ENCODE measurements at regions of chr9 and their contacts with region 1.

Region 1: DNA sequence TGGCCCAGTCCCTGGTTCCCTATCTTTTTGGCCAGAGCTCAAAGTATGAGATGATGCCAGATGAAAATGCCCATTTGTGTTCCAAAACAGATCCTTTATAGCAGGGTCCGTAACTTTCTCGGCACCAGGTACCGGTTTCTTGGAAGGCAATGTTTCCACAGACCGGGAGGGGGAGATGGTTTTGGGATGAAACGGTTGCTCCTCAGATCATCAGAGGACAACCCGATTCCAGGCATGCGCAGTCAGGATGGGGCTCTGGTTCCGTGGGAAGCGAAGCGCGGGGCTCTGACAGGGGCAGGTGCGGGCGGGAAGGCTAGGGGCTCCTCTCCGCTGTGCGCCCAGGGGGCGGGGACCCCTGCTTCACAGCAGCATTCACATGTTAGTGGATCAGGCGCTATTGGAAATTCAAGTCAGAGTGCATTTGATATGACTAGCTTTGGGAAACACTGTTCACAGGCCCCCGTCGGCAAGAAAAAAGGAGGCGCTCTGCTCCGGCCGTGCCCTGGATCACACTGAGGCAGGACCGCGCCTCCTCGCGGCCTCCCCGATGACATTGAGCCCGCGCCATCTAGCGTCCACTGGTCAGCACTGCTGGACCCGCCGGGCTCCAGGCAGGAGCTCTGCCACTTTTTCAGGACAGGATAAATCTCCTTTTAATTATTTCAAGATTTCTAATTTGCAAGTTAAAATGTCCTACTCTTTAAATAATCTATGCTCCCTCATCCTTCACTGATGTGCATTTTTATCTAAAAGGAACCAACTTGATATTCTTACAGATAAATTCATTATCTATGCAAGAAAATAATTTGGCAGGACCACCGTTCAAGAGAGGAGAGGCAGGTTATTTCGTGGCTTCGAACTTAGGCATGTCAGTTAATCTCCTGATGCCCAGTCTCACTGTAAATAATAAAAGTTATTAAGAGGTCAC is 190.0 kb downstream of the FANCC start:
- DNase-seq: peak; percentile 79
- H3K4me3 Mint-ChIP-seq: no peak overlapping the region
- H3K27ac Mint-ChIP-seq: no peak overlapping the region
- H3K4me1 Mint-ChIP-seq: peaks cover 2% of the 10 kb centered on the region
- H3K27me3 Mint-ChIP-seq: no peaks in the 10 kb centered on the region

Region 2: DNA sequence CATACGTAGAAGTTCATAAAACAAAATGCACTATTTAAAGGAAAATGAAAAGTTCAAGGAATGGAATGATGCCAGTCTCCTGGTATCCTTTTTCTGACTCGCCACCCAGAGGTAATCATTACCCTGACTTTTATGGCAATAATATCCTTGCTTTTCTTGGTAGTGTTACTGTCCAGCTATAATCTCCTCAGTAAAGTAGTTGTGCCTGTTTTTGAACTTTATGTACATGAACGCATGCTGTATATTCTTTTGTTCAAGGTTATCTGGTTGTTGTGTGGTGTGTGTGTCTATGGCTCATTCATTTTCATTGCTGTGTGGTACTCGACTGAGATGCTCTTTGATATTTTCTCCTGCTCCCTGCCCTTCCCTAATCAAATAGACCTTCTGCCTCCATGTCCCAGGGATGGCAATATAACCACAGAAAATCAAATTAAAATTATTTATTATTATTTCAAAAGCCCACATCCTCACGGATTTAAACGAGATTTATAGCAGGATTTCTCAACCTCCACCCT is 459.0 kb before region 1 on chr9:
- CTCF ChIA-PET with region 1: interaction called, 47 read pairs
- POLR2A ChIA-PET with region 1: no interaction called
- DNase-seq: no peak
- H3K4me3 Mint-ChIP-seq: peak overlapping the region; percentile 22
- H3K27ac Mint-ChIP-seq: no peak overlapping the region
- H3K4me1 Mint-ChIP-seq: peaks cover 10% of the 10 kb centered on the region
- H3K27me3 Mint-ChIP-seq: peaks cover 40% of the 10 kb centered on the region

Region 3: GRCh38 chr9:94681508-94681907 is 446.0 kb before region 1 on chr9:
- CTCF ChIA-PET with region 1: interaction called, 164 read pairs
- POLR2A ChIA-PET with region 1: interaction called, 3 read pairs
- DNase-seq: peak; percentile 60
- H3K4me3 Mint-ChIP-seq: no peak overlapping the region
- H3K27ac Mint-ChIP-seq: no peak overlapping the region
- H3K4me1 Mint-ChIP-seq: no peaks in the 10 kb centered on the region
- H3K27me3 Mint-ChIP-seq: peaks cover 44% of the 10 kb centered on the region

Region 4: GRCh38 chr9:94783102-94783664 is 344.3 kb before region 1 on chr9:
- CTCF ChIA-PET with region 1: interaction called, 92 read pairs
- POLR2A ChIA-PET with region 1: no interaction called
- DNase-seq: peak; percentile 55
- H3K4me3 Mint-ChIP-seq: no peak overlapping the region
- H3K27ac Mint-ChIP-seq: no peak overlapping the region
- H3K4me1 Mint-ChIP-seq: peaks cover 16% of the 10 kb centered on the region
- H3K27me3 Mint-ChIP-seq: no peaks in the 10 kb centered on the region

Region 5: DNA sequence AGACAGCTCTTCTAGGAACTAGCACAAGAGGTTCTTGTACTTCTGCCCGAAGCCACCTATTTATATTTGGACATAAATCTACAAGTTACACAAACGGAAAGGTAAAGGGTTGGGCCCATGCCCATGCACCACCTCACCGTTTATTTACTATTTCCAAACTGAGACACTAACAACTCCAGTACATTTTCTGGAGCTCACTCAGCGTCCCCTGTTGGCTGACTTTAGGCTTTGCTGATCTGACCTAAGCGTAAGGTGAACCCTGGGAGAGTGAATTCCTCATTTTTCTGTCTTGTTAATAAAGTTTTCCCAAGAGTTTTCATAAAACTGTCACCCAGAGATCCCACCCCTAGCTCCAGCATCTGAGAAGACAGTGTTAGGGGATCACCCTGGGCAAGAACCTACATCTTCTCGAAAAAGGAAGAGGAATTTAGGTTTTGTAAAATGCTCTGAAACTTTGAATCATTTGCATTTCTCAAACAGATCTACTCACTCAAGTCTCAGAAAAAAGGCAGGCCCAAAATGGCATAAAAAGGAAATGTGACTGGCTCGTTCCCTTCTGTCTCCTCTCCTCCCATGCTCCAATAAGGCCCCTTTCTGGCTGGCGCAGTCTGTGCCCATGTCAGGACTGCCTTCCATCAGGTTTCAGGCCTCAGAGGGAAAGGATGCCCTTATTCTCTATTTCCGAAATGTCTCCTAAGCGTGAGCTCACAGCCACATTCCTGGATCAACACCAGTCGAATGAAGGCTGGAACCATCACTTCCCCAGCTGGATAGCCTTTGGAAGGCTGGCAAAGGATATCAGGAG is 11.3 kb before region 1 on chr9:
- CTCF ChIA-PET with region 1: interaction called, 15 read pairs
- POLR2A ChIA-PET with region 1: no interaction called
- DNase-seq: no peak
- H3K4me3 Mint-ChIP-seq: no peak overlapping the region
- H3K27ac Mint-ChIP-seq: no peak overlapping the region
- H3K4me1 Mint-ChIP-seq: peaks cover 2% of the 10 kb centered on the region
- H3K27me3 Mint-ChIP-seq: no peaks in the 10 kb centered on the region

Region 6: DNA sequence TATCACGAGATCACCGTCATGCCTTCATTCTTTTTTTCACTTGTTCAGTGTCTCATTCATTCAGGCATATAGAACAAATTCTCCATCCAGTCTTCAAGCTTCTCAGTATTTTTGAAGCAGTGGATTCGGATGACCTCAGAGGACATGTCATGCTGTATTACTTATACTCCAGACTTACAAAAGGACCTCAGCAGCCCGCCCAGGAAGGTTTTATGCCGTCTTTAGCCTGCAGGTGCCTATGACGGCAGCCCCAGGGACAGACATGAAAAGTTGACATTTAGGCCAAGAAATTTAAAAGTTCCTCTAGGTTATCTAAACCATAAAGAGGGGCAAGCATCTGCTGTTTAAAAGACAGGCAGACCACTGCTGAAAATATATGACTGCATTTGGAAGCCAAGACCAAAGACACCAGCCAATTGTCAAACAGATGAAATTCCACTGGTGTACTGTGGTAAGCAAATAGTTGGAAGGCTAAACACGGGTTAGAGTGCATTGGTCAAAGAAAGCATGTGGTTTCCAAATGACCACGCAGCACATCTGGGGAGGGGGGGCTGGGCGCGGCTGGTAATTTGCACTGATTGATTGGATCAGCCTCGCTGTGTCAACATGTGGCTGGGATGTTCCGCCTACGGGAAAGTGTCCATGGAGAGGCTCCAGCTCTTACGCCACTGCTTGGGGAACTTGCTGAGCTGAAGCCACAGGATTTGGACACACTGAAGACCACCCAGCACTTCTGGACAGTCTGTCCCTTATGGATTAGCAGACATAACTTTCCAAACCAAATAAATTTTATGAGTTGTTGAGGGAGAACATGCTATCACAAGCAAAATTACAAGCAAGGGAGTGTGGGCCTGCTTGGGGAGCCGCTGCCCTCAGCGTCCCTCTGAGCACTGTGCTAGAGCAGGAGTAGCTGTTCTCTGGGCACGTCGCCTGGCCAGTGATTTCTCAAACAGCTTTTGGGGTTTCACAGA is 16.4 kb after region 1 on chr9:
- CTCF ChIA-PET with region 1: interaction called, 12 read pairs
- POLR2A ChIA-PET with region 1: no interaction called
- DNase-seq: no peak
- H3K4me3 Mint-ChIP-seq: no peak overlapping the region
- H3K27ac Mint-ChIP-seq: no peak overlapping the region
- H3K4me1 Mint-ChIP-seq: peaks cover 11% of the 10 kb centered on the region
- H3K27me3 Mint-ChIP-seq: no peaks in the 10 kb centered on the region

Region 7: GRCh38 chr9:95167998-95168397 is 40.5 kb after region 1 on chr9:
- CTCF ChIA-PET with region 1: interaction called, 23 read pairs
- POLR2A ChIA-PET with region 1: no interaction called
- DNase-seq: peak; percentile 69
- H3K4me3 Mint-ChIP-seq: no peak overlapping the region
- H3K27ac Mint-ChIP-seq: peak overlapping the region; percentile 17
- H3K4me1 Mint-ChIP-seq: peaks cover 34% of the 10 kb centered on the region
- H3K27me3 Mint-ChIP-seq: no peaks in the 10 kb centered on the region

Region 8: GRCh38 chr9:95225076-95225725 is 97.7 kb after region 1 on chr9:
- CTCF ChIA-PET with region 1: no interaction called
- POLR2A ChIA-PET with region 1: no interaction called
- DNase-seq: no peak
- H3K4me3 Mint-ChIP-seq: no peak overlapping the region
- H3K27ac Mint-ChIP-seq: no peak overlapping the region
- H3K4me1 Mint-ChIP-seq: peaks cover 4% of the 10 kb centered on the region
- H3K27me3 Mint-ChIP-seq: no peaks in the 10 kb centered on the region

Measured in activated CD4-positive, alpha-beta memory T cell treated with anti-CD3 and anti-CD28 coated beads, Interleukin-2, amount 10 ng/mL, durations not matched to agents 7 days and 5 days (primary cell).